Lower lobe of right lung (tissue), 2 donors: ENCODE measurements at regions of chr16 and their contacts with region 1.

Region 1: GRCh38 chr16:66483689-66484481 is 56.8 kb downstream of the BEAN1 start:
- DNase-seq: peak; percentile 87
- ATAC-seq: peak; percentile 82 to 85
- H3K4me3 ChIP-seq: no peak overlapping the region
- H3K27ac ChIP-seq: no peak overlapping the region
- H3K4me1 ChIP-seq: peaks cover 25% of the 10 kb centered on the region
- H3K27me3 ChIP-seq: no peaks in the 10 kb centered on the region
- CTCF ChIP-seq: peak; percentile 93

Region 2: GRCh38 chr16:66406534-66407221 is 77.2 kb before region 1 on chr16:
- intact Hi-C with region 1: loop called (anchors 5 kb)
- DNase-seq: peak; percentile 87
- ATAC-seq: peak; percentile 91 to 93
- H3K4me3 ChIP-seq: peak overlapping the region; percentile 54
- H3K27ac ChIP-seq: peak overlapping the region; percentile 48
- H3K4me1 ChIP-seq: peaks cover 20% of the 10 kb centered on the region
- H3K27me3 ChIP-seq: no peaks in the 10 kb centered on the region
- CTCF ChIP-seq: peak; percentile 94